ENCODE measurements at regions of chr6 and their contacts with region 1.

Region 1: GRCh38 chr6:32153564-32154513 is at the start of gene PPT2:
- DNase-seq: peak; percentile 70 to 96
- H3K4me3 ChIP-seq: peak within 1 kb of the TSS; percentile 79 to 86
- H3K27ac ChIP-seq: peak within 1 kb of the TSS; percentile 90 to 96
- H3K4me1 ChIP-seq: peaks cover 12 to 27% of the 10 kb centered on the region in 2 donors
- H3K27me3 ChIP-seq: no peaks in the 10 kb centered on the region
- CTCF ChIP-seq: peak in 1 of 3 experiments; percentile 21
- total RNA-seq, gene PPT2: 839 TPM

Region 2: DNA sequence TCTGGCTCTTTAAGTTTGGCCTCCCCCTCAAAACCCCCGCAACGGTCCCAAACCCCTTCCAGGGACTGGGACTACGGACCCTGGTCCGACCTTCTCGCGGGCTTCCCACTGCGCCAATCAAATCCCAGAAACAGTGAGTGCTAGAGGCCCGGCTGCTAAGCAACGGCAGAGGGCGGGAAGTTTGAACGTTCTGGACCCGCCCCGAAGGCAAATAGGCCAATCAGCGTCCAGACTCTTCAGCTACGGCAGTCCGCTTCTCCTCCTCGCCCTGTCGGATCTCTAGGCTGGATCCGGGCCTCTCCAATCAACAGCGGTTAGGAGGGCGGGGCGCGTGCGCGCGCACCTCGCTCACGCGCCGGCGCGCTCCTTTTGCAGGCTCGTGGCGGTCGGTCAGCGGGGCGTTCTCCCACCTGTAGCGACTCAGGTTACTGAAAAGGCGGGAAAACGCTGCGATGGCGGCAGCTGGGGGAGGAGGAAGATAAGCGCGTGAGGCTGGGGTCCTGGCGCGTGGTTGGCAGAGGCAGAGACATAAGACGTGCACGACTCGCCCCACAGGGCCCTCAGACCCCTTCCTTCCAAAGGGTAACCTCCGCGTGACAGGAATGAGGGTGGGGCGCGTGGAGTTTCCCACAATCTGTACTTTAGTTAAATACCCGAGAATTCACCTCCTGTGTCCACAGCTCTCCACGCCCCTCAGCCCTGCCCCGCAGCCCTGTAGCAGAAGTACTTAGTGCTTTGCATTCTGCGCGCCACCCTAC is 414.0 kb before region 1 on chr6 and contains the start of gene MSH5:
- intact Hi-C with region 1: loop called (anchors 10 kb)
- DNase-seq: peak; percentile 96 to 99
- H3K4me3 ChIP-seq: peak within 1 kb of the TSS; percentile 61 to 73
- H3K27ac ChIP-seq: peak within 1 kb of the TSS; percentile 56 to 94
- H3K4me1 ChIP-seq: peaks cover 9 to 23% of the 10 kb centered on the region in 2 donors
- H3K27me3 ChIP-seq: no peaks in the 10 kb centered on the region
- CTCF ChIP-seq: no peak
- total RNA-seq, gene MSH5: 17.7 TPM

Region 3: GRCh38 chr6:32047850-32048766 is 105.7 kb before region 1 on chr6:
- intact Hi-C with region 1: loop called (anchors 10 kb)
- DNase-seq: peak in 1 of 2 donors; percentile 87
- H3K4me3 ChIP-seq: no peak overlapping the region
- H3K27ac ChIP-seq: peak overlapping the region; percentile 69 to 77
- H3K4me1 ChIP-seq: peaks cover 0 to 19% of the 10 kb centered on the region in 2 donors
- H3K27me3 ChIP-seq: no peaks in the 10 kb centered on the region
- CTCF ChIP-seq: peak; percentile 81 to 91 (median 83)

Region 4: GRCh38 chr6:32118782-32119628 is 34.8 kb before region 1 on chr6:
- intact Hi-C with region 1: loop called (anchors 1 kb)
- DNase-seq: peak in 1 of 2 donors; percentile 90
- H3K4me3 ChIP-seq: no peak overlapping the region
- H3K27ac ChIP-seq: peak overlapping the region in 1 of 2 donors; percentile 10
- H3K4me1 ChIP-seq: peaks cover 0 to 8% of the 10 kb centered on the region in 2 donors
- H3K27me3 ChIP-seq: no peaks in the 10 kb centered on the region
- CTCF ChIP-seq: peak; percentile 88 to 93 (median 89)

Region 5: GRCh38 chr6:32177788-32178546 is 24.1 kb after region 1 on chr6 and contains the start of gene RNF5:
- intact Hi-C with region 1: loop called (anchors 1 kb)
- DNase-seq: peak; percentile 96 to 99
- H3K4me3 ChIP-seq: peak within 1 kb of the TSS; percentile 73 to 99
- H3K27ac ChIP-seq: peak within 1 kb of the TSS; percentile 87 to 92
- H3K4me1 ChIP-seq: peaks cover 9 to 27% of the 10 kb centered on the region in 2 donors
- H3K27me3 ChIP-seq: no peaks in the 10 kb centered on the region
- CTCF ChIP-seq: no peak
- total RNA-seq, gene RNF5: 73.0 TPM

Region 6: GRCh38 chr6:33200219-33201146 is 1046.6 kb after region 1 on chr6 and contains the starts of genes RXRB and SLC39A7:
- intact Hi-C with region 1: no loop called
- DNase-seq: peak; percentile 99 to 100
- H3K4me3 ChIP-seq: peak within 1 kb of the TSS; percentile 90 to 91
- H3K27ac ChIP-seq: peak within 1 kb of the TSS; percentile 95 to 97
- H3K4me1 ChIP-seq: peaks cover 16 to 32% of the 10 kb centered on the region in 2 donors
- H3K27me3 ChIP-seq: no peaks in the 10 kb centered on the region
- CTCF ChIP-seq: no peak
- total RNA-seq, gene RXRB: 21.6 TPM
- total RNA-seq, gene SLC39A7: 59.7 TPM